ENCODE measurements at regions of chr5 and their contacts with region 1.

Region 1: DNA sequence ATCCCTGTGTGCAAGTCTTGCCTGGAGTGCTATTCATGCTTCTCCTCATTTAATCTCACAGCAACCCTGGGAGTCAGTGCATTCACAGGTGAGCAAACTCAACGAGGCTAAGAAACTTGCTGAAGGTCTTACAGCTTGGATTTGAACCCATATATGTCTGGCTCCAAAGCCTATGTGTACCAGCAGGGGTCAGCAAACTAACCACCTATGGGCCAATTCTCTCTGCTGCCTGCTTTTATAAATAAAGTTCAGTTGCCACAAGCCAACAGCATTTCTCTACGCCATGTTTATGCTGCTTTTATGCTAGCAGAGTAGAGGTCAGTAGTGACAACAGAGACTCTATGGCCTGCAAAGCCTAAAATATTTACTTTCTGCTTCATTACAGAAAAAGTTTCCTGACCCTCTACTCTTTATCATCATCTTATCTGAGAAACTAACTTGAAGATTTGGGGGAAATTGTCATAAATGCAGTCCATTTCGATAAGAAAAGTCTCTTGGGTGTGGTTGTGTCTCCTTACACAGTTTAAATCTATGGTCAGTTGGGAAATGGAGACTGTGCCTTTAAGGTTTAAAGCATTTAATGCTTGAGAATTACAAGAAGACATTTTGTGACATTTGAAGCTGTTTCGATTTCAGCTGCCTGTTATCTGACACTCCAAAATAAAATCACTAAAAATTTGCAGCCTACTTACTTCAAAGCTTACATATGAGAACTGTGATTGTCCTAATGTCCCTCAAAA is 137.7 kb downstream of the PRELID2 start:
- DNase-seq: peak; percentile 19
- H3K4me3 ChIP-seq: no peak overlapping the region
- H3K27ac ChIP-seq: no peak overlapping the region
- H3K4me1 ChIP-seq: no peaks in the 10 kb centered on the region
- H3K27me3 ChIP-seq: no peaks in the 10 kb centered on the region
- CTCF ChIP-seq: peak; percentile 63 to 65

Region 2: GRCh38 chr5:145743396-145744061 is 46.1 kb after region 1 on chr5:
- CTCF ChIA-PET with region 1: no interaction called
- dilution Hi-C with region 1: no loop called
- in situ Hi-C with region 1: no loop called
- intact Hi-C with region 1: no loop called
- DNase-seq: no peak
- H3K4me3 ChIP-seq: no peak overlapping the region
- H3K27ac ChIP-seq: no peak overlapping the region
- H3K4me1 ChIP-seq: no peaks in the 10 kb centered on the region
- H3K27me3 ChIP-seq: no peaks in the 10 kb centered on the region
- CTCF ChIP-seq: no peak

Region 3: GRCh38 chr5:145887976-145888574 is 190.7 kb after region 1 on chr5:
- CTCF ChIA-PET with region 1: no interaction called
- dilution Hi-C with region 1: no loop called
- in situ Hi-C with region 1: no loop called
- intact Hi-C with region 1: loop called (anchors 1 kb)
- DNase-seq: peak; percentile 51
- H3K4me3 ChIP-seq: no peak overlapping the region
- H3K27ac ChIP-seq: no peak overlapping the region
- H3K4me1 ChIP-seq: no peaks in the 10 kb centered on the region
- H3K27me3 ChIP-seq: no peaks in the 10 kb centered on the region
- CTCF ChIP-seq: peak; percentile 93 to 96